Cardiac septum (tissue), 1 donor: ENCODE measurements at regions of chr14 and their contacts with region 1.

Region 1: DNA sequence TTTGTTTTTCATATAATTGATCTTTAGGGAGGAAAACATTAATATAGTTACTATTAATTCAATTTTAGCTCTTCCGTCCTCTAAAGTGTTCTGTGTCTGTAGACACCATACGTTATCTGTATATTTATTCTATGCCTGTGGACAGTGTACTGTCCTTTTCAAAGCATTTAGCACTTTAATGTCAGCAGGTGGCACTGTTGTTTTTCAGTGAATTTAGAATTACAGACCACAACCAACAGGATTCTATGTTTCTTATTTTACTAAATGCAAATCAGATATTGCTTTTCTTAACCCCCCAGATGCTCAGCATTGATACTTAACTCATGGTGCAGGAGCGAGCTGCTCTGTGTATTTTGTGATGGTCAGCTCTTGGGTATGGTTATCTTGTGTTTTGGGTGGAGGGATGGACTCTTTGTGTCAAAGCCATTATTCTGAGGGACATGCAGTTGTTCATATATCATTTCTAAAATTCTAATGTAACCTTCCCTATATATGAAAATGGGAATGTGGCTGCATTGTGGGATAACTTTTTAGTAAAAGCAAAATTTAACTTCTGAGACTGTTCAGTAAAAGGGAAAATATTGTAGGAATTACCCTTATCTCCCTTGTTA is 65.2 kb downstream of the PAPOLA start:
- DNase-seq: no peak

Region 2: DNA sequence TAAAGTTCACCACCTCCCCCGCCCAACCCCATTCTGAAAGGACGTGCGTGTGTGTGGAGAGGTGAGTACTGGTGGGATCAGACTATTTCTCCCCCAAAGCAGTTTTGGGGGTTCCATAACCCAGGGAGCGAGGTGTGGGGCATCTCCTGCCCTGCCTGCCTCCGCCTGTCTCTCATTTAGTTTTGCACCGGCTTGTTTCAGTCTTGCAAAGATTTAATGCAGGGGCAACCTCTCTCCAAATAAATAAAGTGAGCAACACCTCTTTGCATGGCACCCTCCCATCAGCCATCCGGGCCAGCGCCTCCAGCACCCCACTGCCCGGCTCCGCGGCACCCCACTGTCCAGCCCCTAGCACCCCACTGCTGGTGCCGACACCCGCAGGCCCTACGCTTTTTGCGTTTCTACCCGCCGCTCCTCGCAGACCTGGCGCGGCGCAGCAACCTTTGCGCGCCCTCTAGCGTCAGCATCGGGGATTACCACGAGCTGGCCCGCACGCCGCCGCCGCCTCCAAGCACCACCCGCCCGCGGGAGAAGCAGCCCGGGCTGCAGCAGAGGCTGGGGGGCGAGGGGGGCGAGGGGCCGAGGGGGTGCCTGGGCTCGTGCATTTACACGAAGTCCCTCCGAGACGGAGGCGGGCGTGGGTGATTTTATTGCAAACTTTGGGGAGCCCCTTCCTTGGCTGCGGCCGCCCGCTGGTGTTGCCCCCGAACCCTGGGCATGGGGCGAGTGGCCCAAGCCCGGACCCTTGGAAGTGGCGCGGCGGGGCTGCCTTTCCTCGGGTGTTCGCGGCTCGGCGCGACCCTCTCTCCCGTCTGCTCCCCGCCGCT is 174.0 kb after region 1 on chr14:
- intact Hi-C with region 1: loop called (anchors 5 kb)
- DNase-seq: peak; percentile 88